Activated naive CD4-positive, alpha-beta T cell treated with anti-CD3 and anti-CD28 coated beads for 36 hours (primary cell): ENCODE measurements at regions of chr2 and their contacts with region 1.

Region 1: DNA sequence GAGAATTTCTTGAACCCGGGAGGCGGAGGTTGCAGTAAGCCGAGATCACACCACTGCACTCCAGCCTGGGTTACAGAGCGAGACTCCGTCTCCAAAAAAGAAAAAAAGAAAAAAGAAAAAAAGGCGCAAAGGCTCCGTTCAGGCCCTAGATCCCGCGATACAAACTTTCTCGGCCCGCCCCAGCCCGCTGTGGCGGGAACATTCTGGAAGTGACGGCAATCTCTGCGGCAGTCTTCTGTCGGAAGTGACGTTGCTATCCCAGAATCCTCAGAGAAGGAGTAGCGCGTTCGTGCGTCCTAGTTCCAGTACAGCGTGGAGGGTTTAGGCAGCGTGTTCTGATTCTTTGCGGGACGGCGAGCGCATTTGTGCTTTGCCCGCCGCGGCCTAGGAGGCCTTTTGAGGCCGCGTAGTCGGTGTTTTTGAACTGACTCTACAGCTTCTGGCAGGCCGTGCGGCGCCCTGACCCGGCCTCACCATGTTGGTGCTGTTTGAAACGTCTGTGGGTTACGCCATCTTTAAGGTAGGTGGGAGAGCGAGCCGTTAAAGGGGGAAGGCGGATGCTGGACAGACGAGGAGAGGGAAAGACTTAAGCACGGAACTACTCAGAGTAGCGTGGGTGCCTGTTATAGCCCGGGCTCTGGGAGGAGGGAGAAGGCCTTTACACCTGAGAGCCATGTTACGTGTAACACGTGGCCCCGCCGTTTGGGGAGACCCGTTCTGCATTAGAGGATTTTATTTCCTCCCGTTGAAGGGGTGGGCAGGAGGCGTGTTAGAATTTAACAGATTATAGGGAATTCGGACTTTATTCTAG is at the start of gene NOP58:
- DNase-seq: peak; percentile 96
- H3K4me3 Mint-ChIP-seq: no peak within 1 kb of the TSS
- H3K27ac Mint-ChIP-seq: no peak within 1 kb of the TSS
- H3K4me1 Mint-ChIP-seq: peaks cover 22% of the 10 kb centered on the region
- H3K27me3 Mint-ChIP-seq: no peaks in the 10 kb centered on the region
- total RNA-seq, gene NOP58: 118 to 123 TPM

Region 2: GRCh38 chr2:201451292-201452057 is 814.2 kb before region 1 on chr2 and contains the starts of genes STRADB and TRAK2:
- CTCF ChIA-PET with region 1: no interaction called
- intact Hi-C with region 1: loop called (anchors 5 kb)
- DNase-seq: peak; percentile 96
- H3K4me3 Mint-ChIP-seq: peak within 1 kb of the TSS; percentile 95
- H3K27ac Mint-ChIP-seq: peak within 1 kb of the TSS; percentile 94
- H3K4me1 Mint-ChIP-seq: peaks cover 51% of the 10 kb centered on the region
- H3K27me3 Mint-ChIP-seq: no peaks in the 10 kb centered on the region
- total RNA-seq, gene STRADB: 17.6 to 19.1 TPM
- total RNA-seq, gene TRAK2: 10.4 TPM

Region 3: GRCh38 chr2:202215179-202215578 is 50.5 kb before region 1 on chr2:
- CTCF ChIA-PET with region 1: no interaction called
- intact Hi-C with region 1: no loop called
- DNase-seq: no peak
- H3K4me3 Mint-ChIP-seq: no peak overlapping the region
- H3K27ac Mint-ChIP-seq: no peak overlapping the region
- H3K4me1 Mint-ChIP-seq: peaks cover 1% of the 10 kb centered on the region
- H3K27me3 Mint-ChIP-seq: no peaks in the 10 kb centered on the region

Region 4: GRCh38 chr2:202278944-202279343 is 13.3 kb after region 1 on chr2:
- CTCF ChIA-PET with region 1: interaction called, 3 read pairs
- intact Hi-C with region 1: loop called (anchors 1 kb)
- DNase-seq: no peak
- H3K4me3 Mint-ChIP-seq: no peak overlapping the region
- H3K27ac Mint-ChIP-seq: peak overlapping the region; percentile 92
- H3K4me1 Mint-ChIP-seq: peaks cover 51% of the 10 kb centered on the region
- H3K27me3 Mint-ChIP-seq: no peaks in the 10 kb centered on the region

Region 5: GRCh38 chr2:202703091-202703490 is 437.4 kb after region 1 on chr2:
- CTCF ChIA-PET with region 1: no interaction called
- intact Hi-C with region 1: loop called (anchors 2 kb)
- DNase-seq: no peak
- H3K4me3 Mint-ChIP-seq: no peak overlapping the region
- H3K27ac Mint-ChIP-seq: peak overlapping the region; percentile 71
- H3K4me1 Mint-ChIP-seq: peaks cover 70% of the 10 kb centered on the region
- H3K27me3 Mint-ChIP-seq: no peaks in the 10 kb centered on the region

Region 6: GRCh38 chr2:202718614-202719013 is 452.9 kb after region 1 on chr2:
- CTCF ChIA-PET with region 1: no interaction called
- intact Hi-C with region 1: no loop called
- DNase-seq: no peak
- H3K4me3 Mint-ChIP-seq: no peak overlapping the region
- H3K27ac Mint-ChIP-seq: no peak overlapping the region
- H3K4me1 Mint-ChIP-seq: peaks cover 60% of the 10 kb centered on the region
- H3K27me3 Mint-ChIP-seq: no peaks in the 10 kb centered on the region

Region 7: GRCh38 chr2:203022751-203023150 is 757.1 kb after region 1 on chr2:
- CTCF ChIA-PET with region 1: no interaction called
- intact Hi-C with region 1: no loop called
- DNase-seq: no peak
- H3K4me3 Mint-ChIP-seq: no peak overlapping the region
- H3K27ac Mint-ChIP-seq: no peak overlapping the region
- H3K4me1 Mint-ChIP-seq: peaks cover 23% of the 10 kb centered on the region
- H3K27me3 Mint-ChIP-seq: no peaks in the 10 kb centered on the region

Region 8: GRCh38 chr2:203238704-203239526 is 973.2 kb after region 1 on chr2 and contains the start of gene CYP20A1:
- CTCF ChIA-PET with region 1: no interaction called
- intact Hi-C with region 1: loop called (anchors 5 kb)
- DNase-seq: peak; percentile 97
- H3K4me3 Mint-ChIP-seq: peak within 1 kb of the TSS; percentile 94
- H3K27ac Mint-ChIP-seq: peak within 1 kb of the TSS; percentile 98
- H3K4me1 Mint-ChIP-seq: peaks cover 35% of the 10 kb centered on the region
- H3K27me3 Mint-ChIP-seq: no peaks in the 10 kb centered on the region
- total RNA-seq, gene CYP20A1: 12.0 to 12.2 TPM

Region 9: DNA sequence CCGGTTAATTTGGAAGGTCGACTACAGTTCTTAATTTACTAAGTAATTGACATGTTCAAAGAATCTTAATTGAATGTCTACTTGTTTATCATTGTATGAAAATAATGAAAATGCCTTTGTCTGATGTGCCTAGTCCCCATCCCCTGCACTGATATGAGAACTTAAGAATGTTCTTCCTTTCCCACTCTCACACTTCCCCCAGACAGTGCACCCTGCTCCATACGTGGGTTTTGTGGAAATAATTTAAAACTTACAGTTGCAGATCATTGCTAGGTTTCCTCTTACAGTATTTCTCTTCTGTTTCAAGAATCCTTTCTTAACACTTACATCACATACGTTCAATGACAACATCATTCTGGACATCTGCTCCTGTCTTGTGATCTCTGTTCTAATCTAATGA is 1674.4 kb after region 1 on chr2:
- CTCF ChIA-PET with region 1: no interaction called
- intact Hi-C with region 1: loop called (anchors 5 kb)
- DNase-seq: no peak
- H3K4me3 Mint-ChIP-seq: peak overlapping the region; percentile 92
- H3K27ac Mint-ChIP-seq: peak overlapping the region; percentile 96
- H3K4me1 Mint-ChIP-seq: peaks cover 54% of the 10 kb centered on the region
- H3K27me3 Mint-ChIP-seq: no peaks in the 10 kb centered on the region